Posterior vena cava (tissue), 2 donors: ENCODE measurements at regions of chr7 and their contacts with region 1.

Region 1: GRCh38 chr7:38107486-38107893 is 70.6 kb upstream of the STARD3NL start:
- DNase-seq: no peak

Region 2: DNA sequence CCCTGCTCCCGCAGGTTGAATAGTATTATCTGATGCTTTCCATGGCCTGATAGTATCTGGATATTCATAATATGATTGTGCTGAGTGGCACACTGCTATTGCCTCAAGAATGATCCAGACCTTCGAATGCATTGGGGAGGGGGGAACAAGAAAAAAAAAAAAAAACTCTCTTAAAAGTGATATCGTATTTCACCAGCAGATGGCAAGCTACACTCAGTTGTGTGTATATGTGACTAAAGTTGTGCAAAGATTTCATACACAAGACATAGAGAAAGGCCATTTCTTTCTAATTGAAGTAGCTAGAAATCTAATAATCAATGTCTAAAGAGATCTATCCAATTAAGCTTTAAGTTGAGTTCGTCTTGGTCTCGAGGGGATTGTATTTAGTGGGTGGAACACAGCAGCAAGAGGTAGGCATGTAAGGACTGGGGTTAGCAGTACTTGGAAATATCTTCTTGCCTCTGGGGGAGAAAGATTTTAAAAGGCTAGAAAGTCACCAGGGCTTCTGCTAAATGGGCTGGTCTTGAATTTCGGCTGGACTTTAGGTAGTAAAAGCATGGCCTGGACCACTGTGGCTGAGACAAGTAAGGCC is 206.2 kb before region 1 on chr7:
- intact Hi-C with region 1: loop called in 1 of 2 experiments (anchors 5 kb)
- DNase-seq: no peak

Region 3: GRCh38 chr7:37916673-37917660 is 190.5 kb before region 1 on chr7 and contains the start of gene SFRP4:
- intact Hi-C with region 1: loop called in 1 of 2 experiments (anchors 5 kb)
- DNase-seq: peak; percentile 91
- total RNA-seq, gene SFRP4: 56.7 to 197 TPM

Region 4: DNA sequence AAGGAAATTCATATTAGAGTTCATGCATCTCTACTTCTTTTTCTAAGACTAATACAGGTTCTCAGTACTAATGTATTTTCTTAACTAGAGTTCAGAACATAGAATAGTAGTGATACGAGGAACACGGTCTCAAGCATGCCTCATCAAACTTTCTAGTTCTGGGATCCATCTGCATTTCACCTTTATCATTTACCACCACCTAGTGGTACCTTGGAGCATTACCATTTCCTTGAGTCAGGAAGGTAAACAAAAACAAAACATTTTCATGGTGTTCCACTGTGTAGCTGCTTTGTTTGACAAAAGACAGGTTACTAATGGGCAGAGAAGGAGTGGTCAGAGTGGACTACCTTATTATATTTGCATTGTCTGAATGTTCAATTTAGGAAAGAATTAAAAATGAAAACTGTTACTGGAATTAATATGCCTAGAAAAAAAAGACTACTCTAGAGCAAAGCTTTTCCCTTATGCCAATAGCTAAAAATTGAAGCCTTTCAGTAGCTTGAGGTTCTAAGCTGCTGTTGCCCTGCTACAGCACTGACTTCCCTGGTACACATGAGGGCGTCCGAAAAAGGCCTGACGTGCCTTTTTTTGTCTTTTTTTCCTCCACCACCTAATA is 115.1 kb after region 1 on chr7:
- intact Hi-C with region 1: loop called (anchors 5 kb)
- DNase-seq: no peak